ENCODE measurements at regions of chr12 and their contacts with region 1.

Region 1: GRCh38 chr12:51025836-51026638 is at the start of gene SLC11A2:
- DNase-seq: peak; percentile 93
- H3K4me3 Mint-ChIP-seq: peak within 1 kb of the TSS; percentile 100
- H3K27ac Mint-ChIP-seq: peak within 1 kb of the TSS; percentile 98
- H3K4me1 Mint-ChIP-seq: peaks cover 53% of the 10 kb centered on the region
- H3K27me3 Mint-ChIP-seq: peaks cover 8% of the 10 kb centered on the region
- total RNA-seq, gene SLC11A2: 35.0 to 36.4 TPM

Region 2: GRCh38 chr12:50825372-50825838 is 200.6 kb before region 1 on chr12:
- CTCF ChIA-PET with region 1: interaction called, 37 read pairs
- POLR2A ChIA-PET with region 1: interaction called, 5 read pairs
- DNase-seq: no peak
- H3K4me3 Mint-ChIP-seq: no peak overlapping the region
- H3K27ac Mint-ChIP-seq: no peak overlapping the region
- H3K4me1 Mint-ChIP-seq: peaks cover 5% of the 10 kb centered on the region
- H3K27me3 Mint-ChIP-seq: no peaks in the 10 kb centered on the region

Region 3: GRCh38 chr12:51009056-51009440 is 17.0 kb before region 1 on chr12:
- CTCF ChIA-PET with region 1: interaction called, 3 read pairs
- POLR2A ChIA-PET with region 1: interaction called, 22 read pairs
- DNase-seq: peak; percentile 42
- H3K4me3 Mint-ChIP-seq: no peak overlapping the region
- H3K27ac Mint-ChIP-seq: peak overlapping the region; percentile 49
- H3K4me1 Mint-ChIP-seq: peaks cover 25% of the 10 kb centered on the region
- H3K27me3 Mint-ChIP-seq: no peaks in the 10 kb centered on the region

Region 4: GRCh38 chr12:51056244-51056643 is 30.2 kb after region 1 on chr12:
- CTCF ChIA-PET with region 1: no interaction called
- POLR2A ChIA-PET with region 1: no interaction called
- DNase-seq: no peak
- H3K4me3 Mint-ChIP-seq: no peak overlapping the region
- H3K27ac Mint-ChIP-seq: no peak overlapping the region
- H3K4me1 Mint-ChIP-seq: peaks cover 10% of the 10 kb centered on the region
- H3K27me3 Mint-ChIP-seq: no peaks in the 10 kb centered on the region

Region 5: GRCh38 chr12:51083126-51083833 is 57.2 kb after region 1 on chr12 and contains the start of gene CSRNP2:
- CTCF ChIA-PET with region 1: no interaction called
- POLR2A ChIA-PET with region 1: interaction called, 23 read pairs
- DNase-seq: peak; percentile 96
- H3K4me3 Mint-ChIP-seq: peak within 1 kb of the TSS; percentile 92
- H3K27ac Mint-ChIP-seq: peak within 1 kb of the TSS; percentile 71
- H3K4me1 Mint-ChIP-seq: peaks cover 42% of the 10 kb centered on the region
- H3K27me3 Mint-ChIP-seq: no peaks in the 10 kb centered on the region
- total RNA-seq, gene CSRNP2: 14.7 to 16.3 TPM

Region 6: DNA sequence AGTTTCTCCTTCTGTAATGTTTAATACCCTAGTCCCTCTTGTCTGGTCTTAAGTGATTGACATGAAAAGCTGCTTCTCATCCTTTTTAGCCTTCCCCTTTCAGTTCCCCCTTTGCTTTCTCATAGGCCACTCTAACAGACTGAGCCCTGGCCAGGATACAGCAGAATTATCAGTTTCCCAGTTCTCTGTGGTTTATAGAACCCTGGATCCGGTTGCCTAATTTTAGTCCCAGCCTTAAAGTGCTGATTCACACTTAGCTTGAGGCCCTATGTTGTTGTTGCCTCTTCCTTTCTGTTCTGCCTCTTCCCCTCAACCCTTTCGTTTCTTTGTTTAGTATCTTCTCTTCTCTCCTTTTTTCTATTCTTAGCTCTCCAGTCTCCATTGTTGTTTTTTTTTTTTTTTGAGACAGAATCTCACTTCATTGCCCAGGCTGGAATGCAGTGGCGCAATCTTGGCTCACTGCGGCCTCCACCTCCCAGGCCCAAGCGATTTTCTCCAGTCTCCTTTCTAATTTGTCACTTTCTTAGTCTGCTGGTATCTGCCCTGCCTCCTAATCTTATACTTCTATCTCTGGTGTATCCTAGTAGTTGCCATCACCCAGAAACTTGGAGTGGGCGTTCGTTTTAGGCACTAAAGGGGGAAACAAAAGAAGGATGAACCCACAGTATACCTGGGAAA is 300.9 kb after region 1 on chr12:
- CTCF ChIA-PET with region 1: no interaction called
- POLR2A ChIA-PET with region 1: interaction called, 11 read pairs
- DNase-seq: peak; percentile 24
- H3K4me3 Mint-ChIP-seq: peak overlapping the region; percentile 45
- H3K27ac Mint-ChIP-seq: peak overlapping the region; percentile 97
- H3K4me1 Mint-ChIP-seq: peaks cover 70% of the 10 kb centered on the region
- H3K27me3 Mint-ChIP-seq: peaks cover 2% of the 10 kb centered on the region